ENCODE measurements at regions of chr5 and their contacts with region 1.

Region 1: DNA sequence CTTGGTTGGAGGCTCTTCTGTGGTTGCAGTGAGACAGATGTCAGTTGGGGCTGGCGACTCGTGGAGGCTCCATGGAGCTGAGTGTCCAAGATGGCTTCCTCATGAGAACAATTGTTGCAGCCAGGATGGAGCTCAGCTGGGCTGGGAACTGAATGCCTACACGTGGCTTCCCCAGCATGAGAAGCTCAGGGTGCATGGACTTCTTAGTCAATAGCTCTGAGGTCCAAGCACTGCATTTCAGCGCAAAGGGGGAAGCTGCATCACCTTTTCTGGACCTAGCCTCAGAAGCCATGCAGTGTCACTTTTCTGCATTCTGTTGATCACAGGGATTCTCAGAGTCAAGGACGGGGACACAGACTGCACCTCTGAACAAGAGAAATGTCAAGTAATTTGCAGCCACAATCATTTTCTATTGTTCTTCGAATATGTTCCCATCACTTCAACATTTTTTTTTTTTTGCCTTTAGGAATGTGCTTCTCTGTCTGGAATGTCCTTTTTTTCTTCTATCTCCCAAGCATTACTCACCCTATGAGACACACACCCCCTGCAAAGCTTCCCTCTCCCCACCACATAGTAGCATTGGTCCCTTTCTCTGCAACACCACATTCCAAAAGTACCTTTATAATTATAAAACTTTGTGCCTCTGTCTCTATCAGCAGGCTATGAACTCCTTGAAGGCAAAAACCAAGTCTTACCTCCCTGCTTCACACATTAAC is 57.5 kb upstream of the STK32A start:
- DNase-seq: no peak
- H3K4me3 ChIP-seq: no peak overlapping the region
- CTCF ChIP-seq: no peak

Region 2: DNA sequence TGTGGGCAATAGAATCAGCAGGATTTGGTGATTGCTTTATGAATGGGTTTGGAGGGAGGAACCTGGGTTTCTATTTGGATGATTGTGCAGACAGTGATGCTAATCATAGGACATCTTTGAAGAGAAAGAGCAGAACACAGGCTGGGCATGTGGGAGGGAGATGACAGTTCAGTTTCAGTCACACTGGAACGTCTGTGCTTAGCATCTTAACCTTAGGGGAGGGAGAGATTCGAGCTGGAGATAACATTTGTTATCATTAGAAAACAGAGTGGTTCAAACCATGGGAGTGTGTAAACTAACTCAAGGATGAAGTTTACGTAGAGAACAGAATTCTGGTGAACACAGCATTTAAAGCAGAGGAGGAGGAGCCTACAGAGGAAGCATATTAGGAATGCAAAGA is 160.1 kb before region 1 on chr5:
- CTCF ChIA-PET with region 1: no interaction called
- POLR2A ChIA-PET with region 1: no interaction called
- DNase-seq: no peak
- H3K4me3 ChIP-seq: no peak overlapping the region
- CTCF ChIP-seq: no peak

Region 3: GRCh38 chr5:147098233-147098790 is 79.0 kb before region 1 on chr5:
- CTCF ChIA-PET with region 1: interaction called, 10 read pairs
- POLR2A ChIA-PET with region 1: no interaction called
- DNase-seq: no peak
- H3K4me3 ChIP-seq: no peak overlapping the region
- CTCF ChIP-seq: peak; percentile 24

Region 4: GRCh38 chr5:147200001-147200400 is 22.7 kb after region 1 on chr5:
- CTCF ChIA-PET with region 1: no interaction called
- POLR2A ChIA-PET with region 1: no interaction called
- DNase-seq: no peak
- H3K4me3 ChIP-seq: no peak overlapping the region
- CTCF ChIP-seq: no peak

Region 5: DNA sequence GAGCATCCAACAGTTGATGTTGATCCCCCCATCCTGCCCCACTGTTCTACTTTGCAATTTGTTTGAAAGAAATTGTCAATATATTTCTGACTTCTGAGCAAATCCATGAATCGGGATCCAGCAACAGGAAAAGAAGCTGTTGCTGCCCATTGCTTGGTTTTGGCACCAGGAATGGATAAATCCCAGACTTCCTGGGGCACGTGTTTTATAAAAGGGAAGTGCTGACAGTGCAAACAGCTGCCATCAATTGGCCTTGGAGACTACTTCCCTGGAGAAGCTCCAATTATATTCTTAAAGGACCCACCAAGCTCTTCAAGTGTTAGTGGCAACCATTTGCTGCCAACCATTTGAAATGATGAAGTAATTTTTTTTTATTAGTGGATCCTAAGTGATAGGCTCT is 71.3 kb after region 1 on chr5:
- CTCF ChIA-PET with region 1: no interaction called
- POLR2A ChIA-PET with region 1: no interaction called
- DNase-seq: no peak
- H3K4me3 ChIP-seq: no peak overlapping the region
- CTCF ChIP-seq: no peak

Measured in AG04449 (cell line).